ENCODE measurements at regions of chr4 and their contacts with region 1.

Region 1: DNA sequence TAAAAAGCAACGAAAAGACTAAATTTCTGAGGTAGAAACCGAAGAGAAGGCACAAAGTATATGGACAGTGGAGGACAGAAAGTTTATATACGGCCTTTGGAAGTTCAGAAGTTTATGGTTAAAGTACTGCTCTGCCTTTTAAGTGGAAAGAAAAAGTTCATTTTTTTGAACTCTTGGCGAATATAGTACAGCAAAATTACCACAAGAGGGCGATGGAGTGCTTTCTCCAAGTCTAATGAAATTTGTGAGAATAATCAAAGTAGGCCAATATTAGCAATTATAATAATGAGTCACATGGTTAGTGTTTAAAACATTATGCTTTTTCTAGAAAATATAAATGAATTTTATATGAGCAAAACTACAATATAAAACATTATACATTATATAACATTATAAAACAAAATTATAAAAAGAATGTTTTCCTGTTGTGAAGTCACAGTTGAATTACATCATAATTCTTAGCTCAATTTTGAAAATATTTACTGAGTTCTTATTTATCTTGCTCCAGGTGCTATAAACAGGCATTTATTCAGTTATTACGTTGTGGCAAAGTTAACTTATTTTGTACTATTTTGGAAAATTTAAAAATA is 136.2 kb upstream of the BMPR1B start:
- DNase-seq: peak in 6 of 35 experiments; percentile 1 to 59 (median 4)
- ATAC-seq: no peak
- H3K4me3 ChIP-seq: no peak overlapping the region
- H3K4me3 Mint-ChIP-seq: no peak overlapping the region
- H3K27ac ChIP-seq: no peak overlapping the region
- H3K27ac Mint-ChIP-seq: no peak overlapping the region
- H3K4me1 ChIP-seq: no peaks in the 10 kb centered on the region
- H3K4me1 Mint-ChIP-seq: no peaks in the 10 kb centered on the region
- H3K27me3 ChIP-seq: no peaks in the 10 kb centered on the region
- H3K27me3 Mint-ChIP-seq: no peaks in the 10 kb centered on the region

Region 2: DNA sequence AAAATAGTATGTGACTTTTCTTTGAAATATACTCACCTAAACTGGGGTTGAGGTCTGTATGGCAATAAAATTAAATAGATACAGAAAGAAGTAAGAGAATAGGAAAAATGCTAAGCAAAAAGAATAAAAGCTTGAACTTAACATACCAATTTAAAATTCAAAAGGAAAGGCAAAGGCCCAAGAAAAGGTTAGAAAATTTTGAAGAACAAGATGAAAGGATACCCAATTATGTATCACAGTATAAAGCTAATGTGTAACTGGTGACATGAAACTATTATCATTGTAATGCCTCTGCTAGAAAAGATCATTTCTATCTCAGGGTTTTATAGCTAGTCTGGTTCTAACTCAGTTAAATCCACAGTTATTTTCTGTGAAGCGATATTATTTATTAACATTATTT is 70.7 kb before region 1 on chr4:
- CTCF ChIA-PET with region 1: interaction called in 1 of 2 experiments, 11 read pairs
- POLR2A ChIA-PET with region 1: no interaction called
- DNase-seq: no peak
- ATAC-seq: no peak
- H3K4me3 ChIP-seq: no peak overlapping the region
- H3K4me3 Mint-ChIP-seq: no peak overlapping the region
- H3K27ac ChIP-seq: no peak overlapping the region
- H3K27ac Mint-ChIP-seq: no peak overlapping the region
- H3K4me1 ChIP-seq: no peaks in the 10 kb centered on the region
- H3K4me1 Mint-ChIP-seq: peaks cover 5 to 14% (median 9%) of the 10 kb centered on the region in 3 donors
- H3K27me3 ChIP-seq: no peaks in the 10 kb centered on the region
- H3K27me3 Mint-ChIP-seq: no peaks in the 10 kb centered on the region

Region 3: GRCh38 chr4:95038791-95039190 is 417.2 kb after region 1 on chr4:
- CTCF ChIA-PET with region 1: interaction called in 1 of 2 experiments, 11 read pairs
- POLR2A ChIA-PET with region 1: no interaction called
- DNase-seq: no peak
- ATAC-seq: no peak
- H3K4me3 ChIP-seq: no peak overlapping the region
- H3K4me3 Mint-ChIP-seq: no peak overlapping the region
- H3K27ac ChIP-seq: no peak overlapping the region
- H3K27ac Mint-ChIP-seq: no peak overlapping the region
- H3K4me1 ChIP-seq: no peaks in the 10 kb centered on the region
- H3K4me1 Mint-ChIP-seq: no peaks in the 10 kb centered on the region
- H3K27me3 ChIP-seq: no peaks in the 10 kb centered on the region
- H3K27me3 Mint-ChIP-seq: peaks cover 0 to 10% of the 10 kb centered on the region in 2 donors